ENCODE measurements at regions of chr2 and their contacts with region 1.

Region 1: GRCh38 chr2:39609917-39610316 is 55.8 kb upstream of the TMEM178A start:
- DNase-seq: no peak

Region 2: DNA sequence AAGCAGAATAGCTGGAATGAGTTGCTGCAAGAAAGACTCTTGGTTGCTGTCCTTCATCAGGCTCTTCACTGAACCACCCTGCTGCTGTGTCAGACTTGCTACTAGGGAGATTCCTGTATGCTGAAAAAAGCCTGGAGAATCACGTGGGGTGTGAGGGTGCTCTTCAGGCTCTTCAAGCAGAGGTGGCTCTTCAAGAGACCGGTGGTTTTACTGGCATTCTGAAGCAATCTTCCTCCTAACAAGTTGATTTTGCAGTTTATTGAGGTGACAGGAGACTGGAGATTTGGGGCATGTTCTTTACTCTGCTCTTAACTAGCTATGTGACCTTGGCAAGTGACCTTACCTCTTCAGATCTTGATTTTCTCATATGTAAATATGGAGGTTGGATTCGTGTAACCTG is 69.9 kb after region 1 on chr2:
- intact Hi-C with region 1: loop called (anchors 5 kb)
- DNase-seq: no peak

Measured in cardiac septum (tissue), 1 donor.